Common myeloid progenitor, CD34-positive (primary cell): ENCODE measurements at regions of chr2 and their contacts with region 1.

Region 1: GRCh38 chr2:189762551-189763298 is at the start of gene OSGEPL1:
- DNase-seq: peak; percentile 98 to 99 (median 99)
- H3K4me3 ChIP-seq: peak within 1 kb of the TSS; percentile 81 to 99 (median 85)
- H3K27ac ChIP-seq: peak within 1 kb of the TSS; percentile 75 to 88
- H3K4me1 ChIP-seq: peaks cover 9 to 25% (median 16%) of the 10 kb centered on the region in 4 experiments
- H3K27me3 ChIP-seq: no peaks in the 10 kb centered on the region

Region 2: GRCh38 chr2:189783927-189784867 is 21.5 kb after region 1 on chr2 and contains the starts of genes ORMDL1 and PMS1:
- CTCF ChIA-PET with region 1: interaction called, 24 read pairs
- POLR2A ChIA-PET with region 1: interaction called, 14 read pairs
- DNase-seq: peak; percentile 96 to 99 (median 98)
- H3K4me3 ChIP-seq: peak within 1 kb of the TSS; percentile 73 to 98 (median 90)
- H3K27ac ChIP-seq: peak within 1 kb of the TSS; percentile 78 to 90
- H3K4me1 ChIP-seq: peaks cover 12 to 25% (median 19%) of the 10 kb centered on the region in 4 experiments
- H3K27me3 ChIP-seq: no peaks in the 10 kb centered on the region

Region 3: DNA sequence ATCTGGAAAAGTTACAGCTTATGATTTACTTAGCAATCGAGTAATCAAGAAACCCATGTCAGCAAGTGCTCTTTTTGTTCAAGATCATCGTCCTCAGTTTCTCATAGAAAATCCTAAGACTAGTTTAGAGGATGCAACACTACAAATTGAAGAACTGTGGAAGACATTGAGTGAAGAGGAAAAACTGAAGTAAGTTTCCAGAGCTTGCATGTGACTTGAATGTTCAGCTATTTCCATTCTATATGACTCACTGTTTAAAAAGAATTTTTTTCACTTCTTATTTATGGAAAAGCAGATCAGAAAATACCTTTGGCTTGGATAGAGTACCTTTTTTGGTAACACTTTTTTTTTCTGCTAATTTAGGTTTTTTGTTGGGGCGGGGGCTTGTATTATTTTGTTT is 92.2 kb after region 1 on chr2:
- CTCF ChIA-PET with region 1: no interaction called
- POLR2A ChIA-PET with region 1: no interaction called
- DNase-seq: no peak
- H3K4me3 ChIP-seq: no peak overlapping the region
- H3K27ac ChIP-seq: no peak overlapping the region
- H3K4me1 ChIP-seq: peaks cover 0 to 3% (median 0%) of the 10 kb centered on the region in 4 experiments
- H3K27me3 ChIP-seq: no peaks in the 10 kb centered on the region